Activated B cell treated with CpG ODN at 0.5 μM for 24 hours (primary cell): ENCODE measurements at regions of chr17 and their contacts with region 1.

Region 1: GRCh38 chr17:28717578-28718333 is at the start of gene RAB34:
- DNase-seq: peak; percentile 46
- ATAC-seq: peak; percentile 14
- H3K4me3 Mint-ChIP-seq: peak within 1 kb of the TSS; percentile 79
- H3K27ac Mint-ChIP-seq: peak within 1 kb of the TSS; percentile 85
- H3K4me1 Mint-ChIP-seq: peaks cover 49% of the 10 kb centered on the region
- H3K27me3 Mint-ChIP-seq: no peaks in the 10 kb centered on the region
- CTCF ChIP-seq: no peak
- total RNA-seq, gene RAB34: 21.3 and 23.9 TPM in 2 replicates

Region 2: GRCh38 chr17:28446728-28447395 is 270.9 kb before region 1 on chr17:
- CTCF ChIA-PET with region 1: no interaction called
- POLR2A ChIA-PET with region 1: no interaction called
- intact Hi-C with region 1: no loop called
- DNase-seq: no peak
- ATAC-seq: no peak
- H3K4me3 Mint-ChIP-seq: no peak overlapping the region
- H3K27ac Mint-ChIP-seq: no peak overlapping the region
- H3K4me1 Mint-ChIP-seq: no peaks in the 10 kb centered on the region
- H3K27me3 Mint-ChIP-seq: peaks cover 25% of the 10 kb centered on the region
- CTCF ChIP-seq: no peak

Region 3: GRCh38 chr17:28661635-28662537 is 55.9 kb before region 1 on chr17 and contains the starts of genes SDF2 and SUPT6H:
- CTCF ChIA-PET with region 1: interaction called, 4 read pairs
- POLR2A ChIA-PET with region 1: interaction called, 33 read pairs
- intact Hi-C with region 1: loop called (anchors 1 kb)
- DNase-seq: peak; percentile 95
- ATAC-seq: peak; percentile 83
- H3K4me3 Mint-ChIP-seq: peak within 1 kb of the TSS; percentile 98
- H3K27ac Mint-ChIP-seq: peak within 1 kb of the TSS; percentile 100
- H3K4me1 Mint-ChIP-seq: peaks cover 56% of the 10 kb centered on the region
- H3K27me3 Mint-ChIP-seq: no peaks in the 10 kb centered on the region
- CTCF ChIP-seq: no peak
- total RNA-seq, gene SDF2: 36.1 and 47.7 TPM in 2 replicates
- total RNA-seq, gene SUPT6H: 77.1 and 92.4 TPM in 2 replicates

Region 4: DNA sequence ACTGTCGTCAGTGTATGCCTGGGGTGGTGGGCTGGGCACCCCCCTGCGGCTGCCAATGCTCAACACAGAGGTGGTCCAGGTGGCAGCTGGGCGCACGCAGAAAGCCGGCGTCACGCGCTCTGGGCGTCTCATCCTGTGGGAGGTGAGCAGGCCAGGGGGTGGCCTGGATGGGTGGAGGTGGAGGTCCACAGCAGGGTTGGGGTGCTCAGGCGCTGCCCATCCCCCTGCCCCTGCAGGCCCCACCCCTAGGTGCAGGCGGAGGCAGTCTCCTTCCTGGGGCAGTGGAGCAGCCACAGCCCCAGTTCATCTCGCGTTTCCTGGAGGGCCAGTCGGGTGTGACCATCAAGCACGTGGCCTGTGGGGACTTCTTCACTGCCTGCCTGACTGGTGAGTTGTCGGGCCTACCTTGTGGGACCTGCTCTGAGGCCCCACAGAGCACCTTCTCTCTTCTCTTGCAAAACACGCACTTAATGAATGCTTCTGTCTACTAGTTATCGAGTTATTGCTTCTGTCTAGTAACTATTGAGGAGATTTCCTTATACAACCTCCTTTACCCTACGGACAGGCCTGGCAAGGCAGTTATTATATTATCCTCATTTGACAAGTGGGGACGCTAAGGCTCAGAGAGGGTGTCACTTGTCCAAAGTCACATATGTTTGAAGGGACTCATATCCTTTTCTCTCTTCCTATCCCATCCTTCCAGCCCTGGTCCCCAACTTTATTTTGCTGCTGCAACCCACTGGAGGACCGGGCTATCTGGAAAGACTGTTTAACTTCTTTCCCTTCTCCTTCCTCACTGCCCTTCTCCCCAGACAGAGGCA is 20.3 kb after region 1 on chr17:
- CTCF ChIA-PET with region 1: interaction called, 7 read pairs
- POLR2A ChIA-PET with region 1: interaction called, 2,384 read pairs
- intact Hi-C with region 1: no loop called
- DNase-seq: peak; percentile 75
- ATAC-seq: peak; percentile 71
- H3K4me3 Mint-ChIP-seq: peak overlapping the region; percentile 80
- H3K27ac Mint-ChIP-seq: peak overlapping the region; percentile 99
- H3K4me1 Mint-ChIP-seq: peaks cover 97% of the 10 kb centered on the region
- H3K27me3 Mint-ChIP-seq: no peaks in the 10 kb centered on the region
- CTCF ChIP-seq: no peak

Region 5: GRCh38 chr17:28812091-28812747 is 94.5 kb after region 1 on chr17:
- CTCF ChIA-PET with region 1: no interaction called
- POLR2A ChIA-PET with region 1: interaction called, 7 read pairs
- intact Hi-C with region 1: loop called (anchors 2 kb)
- DNase-seq: peak; percentile 89
- ATAC-seq: peak; percentile 100
- H3K4me3 Mint-ChIP-seq: peak overlapping the region; percentile 87
- H3K27ac Mint-ChIP-seq: peak overlapping the region; percentile 83
- H3K4me1 Mint-ChIP-seq: peaks cover 31% of the 10 kb centered on the region
- H3K27me3 Mint-ChIP-seq: no peaks in the 10 kb centered on the region
- CTCF ChIP-seq: no peak